ENCODE measurements at regions of chr3 and their contacts with region 1.

Region 1: GRCh38 chr3:29577250-29577649 is 296.4 kb downstream of the RBMS3 start:
- DNase-seq: no peak
- H3K4me3 ChIP-seq: no peak overlapping the region
- H3K27ac ChIP-seq: no peak overlapping the region
- H3K4me1 ChIP-seq: no peaks in the 10 kb centered on the region
- H3K27me3 ChIP-seq: no peaks in the 10 kb centered on the region
- CTCF ChIP-seq: no peak

Region 2: DNA sequence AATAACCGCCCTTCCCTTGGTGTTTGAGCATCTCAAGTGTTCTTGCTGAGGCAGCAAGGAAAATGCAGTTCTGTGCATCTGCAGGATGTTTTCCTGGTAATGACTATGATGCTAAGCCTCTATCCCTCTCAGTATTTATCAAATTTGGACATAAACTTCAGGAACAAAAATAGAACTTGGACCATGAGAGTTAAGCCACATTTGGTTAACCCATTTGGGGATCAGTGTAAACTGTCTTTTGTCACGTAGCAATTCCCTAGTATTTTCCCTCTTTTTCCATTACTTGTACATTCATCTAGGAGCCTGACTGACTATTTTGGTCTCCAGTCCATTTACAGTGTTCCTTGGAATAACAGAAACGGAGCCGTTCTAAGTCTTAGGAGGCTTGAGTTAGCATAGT is 45.6 kb before region 1 on chr3:
- CTCF ChIA-PET with region 1: no interaction called
- POLR2A ChIA-PET with region 1: no interaction called
- intact Hi-C with region 1: no loop called
- DNase-seq: no peak
- H3K4me3 ChIP-seq: no peak overlapping the region
- H3K27ac ChIP-seq: no peak overlapping the region
- H3K4me1 ChIP-seq: no peaks in the 10 kb centered on the region
- H3K27me3 ChIP-seq: no peaks in the 10 kb centered on the region
- CTCF ChIP-seq: no peak

Region 3: GRCh38 chr3:30526031-30526430 is 948.8 kb after region 1 on chr3:
- CTCF ChIA-PET with region 1: interaction called, 10 read pairs
- POLR2A ChIA-PET with region 1: no interaction called
- intact Hi-C with region 1: no loop called
- DNase-seq: no peak
- H3K4me3 ChIP-seq: no peak overlapping the region
- H3K27ac ChIP-seq: no peak overlapping the region
- H3K4me1 ChIP-seq: no peaks in the 10 kb centered on the region
- H3K27me3 ChIP-seq: no peaks in the 10 kb centered on the region
- CTCF ChIP-seq: no peak

Measured in PC-9 (cell line).